Activated T-helper 1 cell treated with anti-CD3 and anti-CD28 coated beads, Interleukin-12 subunit alpha, Interleukin-12 subunit beta, Interleukin-2, Interleukin-4 antibody, amounts not matched to agents 30 ng/mL and 10 ng/mL and 1 ng/mL, durations not matched to agents 14 hours and 24 hours and 36 hours (primary cell): ENCODE measurements at regions of chr3 and their contacts with region 1.

Region 1: GRCh38 chr3:38346587-38347410 is at the start of gene XYLB:
- DNase-seq: peak; percentile 76
- H3K4me3 Mint-ChIP-seq: peak within 1 kb of the TSS; percentile 85
- H3K27ac Mint-ChIP-seq: no peak within 1 kb of the TSS
- H3K4me1 Mint-ChIP-seq: peaks cover 8% of the 10 kb centered on the region
- H3K27me3 Mint-ChIP-seq: peaks cover 8% of the 10 kb centered on the region
- total RNA-seq, gene XYLB: 7.1 and 9.9 TPM in 2 replicates

Region 2: GRCh38 chr3:37974121-37975083 is 372.4 kb before region 1 on chr3:
- intact Hi-C with region 1: loop called (anchors 2 kb)
- DNase-seq: peak; percentile 54
- H3K4me3 Mint-ChIP-seq: no peak overlapping the region
- H3K27ac Mint-ChIP-seq: no peak overlapping the region
- H3K4me1 Mint-ChIP-seq: peaks cover 6% of the 10 kb centered on the region
- H3K27me3 Mint-ChIP-seq: no peaks in the 10 kb centered on the region

Region 3: GRCh38 chr3:37996785-37997301 is 350.0 kb before region 1 on chr3:
- intact Hi-C with region 1: loop called (anchors 2 kb)
- DNase-seq: peak; percentile 80
- H3K4me3 Mint-ChIP-seq: peak overlapping the region; percentile 9
- H3K27ac Mint-ChIP-seq: peak overlapping the region; percentile 70
- H3K4me1 Mint-ChIP-seq: peaks cover 61% of the 10 kb centered on the region
- H3K27me3 Mint-ChIP-seq: no peaks in the 10 kb centered on the region

Region 4: GRCh38 chr3:38117748-38118420 is 228.9 kb before region 1 on chr3:
- intact Hi-C with region 1: loop called (anchors 1 kb)
- DNase-seq: peak; percentile 60
- H3K4me3 Mint-ChIP-seq: no peak overlapping the region
- H3K27ac Mint-ChIP-seq: no peak overlapping the region
- H3K4me1 Mint-ChIP-seq: no peaks in the 10 kb centered on the region
- H3K27me3 Mint-ChIP-seq: no peaks in the 10 kb centered on the region

Region 5: GRCh38 chr3:38453075-38453912 is 106.5 kb after region 1 on chr3 and contains the start of gene ACVR2B:
- intact Hi-C with region 1: loop called (anchors 1 kb)
- DNase-seq: peak; percentile 66
- H3K4me3 Mint-ChIP-seq: peak within 1 kb of the TSS; percentile 97
- H3K27ac Mint-ChIP-seq: peak within 1 kb of the TSS; percentile 80
- H3K4me1 Mint-ChIP-seq: peaks cover 10% of the 10 kb centered on the region
- H3K27me3 Mint-ChIP-seq: peaks cover 15% of the 10 kb centered on the region
- total RNA-seq, gene ACVR2B: 10.4 and 10.5 TPM in 2 replicates

Region 6: GRCh38 chr3:38468782-38469181 is 122.0 kb after region 1 on chr3:
- intact Hi-C with region 1: no loop called
- DNase-seq: no peak
- H3K4me3 Mint-ChIP-seq: no peak overlapping the region
- H3K27ac Mint-ChIP-seq: no peak overlapping the region
- H3K4me1 Mint-ChIP-seq: peaks cover 18% of the 10 kb centered on the region
- H3K27me3 Mint-ChIP-seq: peaks cover 1% of the 10 kb centered on the region

Region 7: GRCh38 chr3:38479431-38480092 is 132.8 kb after region 1 on chr3:
- intact Hi-C with region 1: loop called (anchors 1 kb)
- DNase-seq: peak; percentile 21
- H3K4me3 Mint-ChIP-seq: no peak overlapping the region
- H3K27ac Mint-ChIP-seq: no peak overlapping the region
- H3K4me1 Mint-ChIP-seq: no peaks in the 10 kb centered on the region
- H3K27me3 Mint-ChIP-seq: no peaks in the 10 kb centered on the region

Region 8: DNA sequence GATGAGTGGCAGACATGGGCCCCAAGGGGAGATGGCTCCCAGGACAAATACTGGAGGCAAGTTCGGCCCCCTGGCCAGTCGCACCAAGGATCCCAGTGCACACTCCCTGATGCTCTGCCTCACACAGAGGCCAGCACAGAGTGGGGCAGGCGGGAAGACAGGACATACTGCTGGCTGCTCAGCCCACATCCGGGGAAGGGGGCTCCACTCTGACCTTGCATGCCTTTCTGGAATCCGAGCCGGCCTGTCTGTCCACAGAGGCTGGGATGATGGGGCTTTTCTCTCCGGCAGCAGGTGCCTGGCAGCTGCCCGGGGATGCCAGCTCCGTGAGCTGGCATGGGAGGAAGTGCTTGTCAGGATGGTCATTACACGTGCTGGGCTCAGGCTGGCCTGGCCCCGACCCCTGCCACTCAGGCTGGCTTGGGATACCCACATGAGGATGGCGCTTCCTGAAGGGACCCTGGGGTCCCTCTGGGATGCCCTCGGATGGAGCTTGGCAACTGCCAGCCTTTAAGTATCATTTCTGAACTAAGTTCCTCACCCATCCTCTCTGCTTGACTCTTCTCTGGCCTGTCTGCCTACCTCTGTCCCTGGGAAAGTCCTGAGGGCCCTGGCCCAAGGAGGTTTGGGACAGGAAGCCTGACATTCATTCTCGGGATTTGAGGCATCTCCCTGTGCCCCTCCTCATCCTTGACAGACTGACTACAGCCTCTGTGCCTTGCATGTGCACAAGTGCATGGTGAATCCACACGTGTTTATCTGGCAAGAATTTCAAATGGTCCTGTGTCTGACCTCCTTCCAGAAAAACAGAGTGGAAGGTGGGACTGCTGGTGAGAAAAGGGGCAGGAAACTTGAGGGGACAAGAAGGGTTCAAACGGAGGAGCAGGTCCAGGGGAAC is 195.9 kb after region 1 on chr3:
- intact Hi-C with region 1: no loop called
- DNase-seq: no peak
- H3K4me3 Mint-ChIP-seq: no peak overlapping the region
- H3K27ac Mint-ChIP-seq: no peak overlapping the region
- H3K4me1 Mint-ChIP-seq: no peaks in the 10 kb centered on the region
- H3K27me3 Mint-ChIP-seq: peaks cover 4% of the 10 kb centered on the region

Region 9: DNA sequence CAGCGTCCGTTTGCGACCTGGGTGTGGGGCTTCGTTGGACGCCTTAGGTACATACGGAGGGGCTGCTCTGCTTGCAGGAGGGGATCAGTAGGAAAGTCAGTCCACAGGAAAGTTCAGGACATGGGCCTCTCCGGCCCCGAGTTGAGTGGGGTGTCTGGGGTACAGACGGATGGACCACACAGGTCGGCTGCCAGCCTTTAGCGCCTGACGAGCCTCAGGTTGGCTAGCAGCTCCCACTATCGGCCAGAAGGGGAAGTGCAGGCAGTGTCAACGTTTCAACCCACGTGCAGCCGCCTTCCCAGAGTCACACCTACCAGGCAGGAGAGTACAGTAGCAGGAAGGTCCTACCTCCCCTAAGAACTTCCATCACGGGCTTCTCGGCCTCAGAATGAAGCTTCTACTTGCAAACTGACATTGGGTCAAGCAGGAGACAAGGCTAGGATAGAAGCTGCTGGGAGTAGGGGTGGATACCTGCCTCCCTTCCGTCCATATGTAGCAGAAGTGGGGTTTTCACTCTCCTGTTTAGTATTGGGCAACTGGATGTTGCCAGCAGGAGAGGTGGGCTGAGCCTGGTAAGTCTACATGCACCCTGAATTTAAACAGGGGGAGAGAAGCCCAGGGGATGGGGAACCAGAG is 304.5 kb after region 1 on chr3:
- intact Hi-C with region 1: loop called (anchors 2 kb)
- DNase-seq: peak; percentile 55
- H3K4me3 Mint-ChIP-seq: no peak overlapping the region
- H3K27ac Mint-ChIP-seq: no peak overlapping the region
- H3K4me1 Mint-ChIP-seq: peaks cover 12% of the 10 kb centered on the region
- H3K27me3 Mint-ChIP-seq: peaks cover 17% of the 10 kb centered on the region